Naive thymus-derived CD4-positive, alpha-beta T cell (primary cell): ENCODE measurements at regions of chr11 and their contacts with region 1.

Region 1: DNA sequence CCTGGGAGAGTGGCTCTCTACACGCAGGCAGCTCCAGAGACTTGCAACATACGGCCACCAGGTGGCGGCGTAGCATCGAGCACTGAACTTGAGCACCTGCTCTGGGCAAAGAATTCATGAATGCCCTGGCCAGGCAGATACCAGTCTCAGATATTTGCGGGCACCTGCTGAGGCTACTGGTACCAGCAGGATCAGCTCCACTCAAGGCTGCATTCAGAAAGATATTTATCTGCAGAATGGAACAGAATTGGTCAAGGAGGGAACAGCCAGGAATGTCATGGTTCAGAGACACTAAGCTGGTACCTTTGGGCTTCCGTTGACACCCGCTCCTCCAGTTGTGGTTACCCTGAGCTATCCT is 10.8 kb upstream of the CCDC86 start:
- DNase-seq: peak; percentile 60 to 82 (median 72)
- ATAC-seq: peak; percentile 89
- H3K4me3 ChIP-seq: no peak overlapping the region
- H3K4me3 Mint-ChIP-seq: peak overlapping the region in 4 of 10 donors; percentile 27 to 77 (median 74)
- H3K27ac ChIP-seq: no peak overlapping the region
- H3K27ac Mint-ChIP-seq: peak overlapping the region in 3 of 9 donors; percentile 32 to 81 (median 40)
- H3K4me1 ChIP-seq: no peaks in the 10 kb centered on the region
- H3K4me1 Mint-ChIP-seq: peaks cover 0 to 10% (median 0%) of the 10 kb centered on the region in 7 donors
- H3K27me3 ChIP-seq: no peaks in the 10 kb centered on the region
- H3K27me3 Mint-ChIP-seq: peaks cover 0 to 15% (median 4%) of the 10 kb centered on the region in 5 donors

Region 2: GRCh38 chr11:60672255-60672654 is 158.9 kb before region 1 on chr11:
- CTCF ChIA-PET with region 1: no interaction called
- POLR2A ChIA-PET with region 1: no interaction called
- intact Hi-C with region 1: no loop called
- DNase-seq: no peak
- ATAC-seq: no peak
- H3K4me3 ChIP-seq: no peak overlapping the region
- H3K4me3 Mint-ChIP-seq: no peak overlapping the region
- H3K27ac ChIP-seq: no peak overlapping the region
- H3K27ac Mint-ChIP-seq: no peak overlapping the region
- H3K4me1 ChIP-seq: no peaks in the 10 kb centered on the region
- H3K4me1 Mint-ChIP-seq: no peaks in the 10 kb centered on the region
- H3K27me3 ChIP-seq: no peaks in the 10 kb centered on the region
- H3K27me3 Mint-ChIP-seq: peaks cover 0 to 37% (median 19%) of the 10 kb centered on the region in 5 donors

Region 3: GRCh38 chr11:60775420-60775961 is 55.6 kb before region 1 on chr11:
- CTCF ChIA-PET with region 1: no interaction called
- POLR2A ChIA-PET with region 1: no interaction called
- intact Hi-C with region 1: loop called in 1 of 2 experiments (anchors 2 kb)
- DNase-seq: peak; percentile 62 to 90 (median 86)
- ATAC-seq: peak; percentile 99
- H3K4me3 ChIP-seq: no peak overlapping the region
- H3K4me3 Mint-ChIP-seq: peak overlapping the region in 3 of 10 donors; percentile 8 to 58 (median 48)
- H3K27ac ChIP-seq: no peak overlapping the region
- H3K27ac Mint-ChIP-seq: peak overlapping the region in 5 of 9 donors; percentile 4 to 78 (median 14)
- H3K4me1 ChIP-seq: no peaks in the 10 kb centered on the region
- H3K4me1 Mint-ChIP-seq: peaks cover 4 to 14% (median 10%) of the 10 kb centered on the region in 7 donors
- H3K27me3 ChIP-seq: no peaks in the 10 kb centered on the region
- H3K27me3 Mint-ChIP-seq: peaks cover 0 to 6% (median 0%) of the 10 kb centered on the region in 5 donors

Region 4: GRCh38 chr11:60860943-60861342 is 29.8 kb after region 1 on chr11:
- CTCF ChIA-PET with region 1: no interaction called
- POLR2A ChIA-PET with region 1: no interaction called
- intact Hi-C with region 1: no loop called
- DNase-seq: no peak
- ATAC-seq: no peak
- H3K4me3 ChIP-seq: no peak overlapping the region
- H3K4me3 Mint-ChIP-seq: no peak overlapping the region
- H3K27ac ChIP-seq: no peak overlapping the region
- H3K27ac Mint-ChIP-seq: no peak overlapping the region
- H3K4me1 ChIP-seq: peaks cover 7% of the 10 kb centered on the region in 2 donors
- H3K4me1 Mint-ChIP-seq: peaks cover 12 to 18% (median 15%) of the 10 kb centered on the region in 7 donors
- H3K27me3 ChIP-seq: no peaks in the 10 kb centered on the region
- H3K27me3 Mint-ChIP-seq: peaks cover 0 to 5% (median 0%) of the 10 kb centered on the region in 5 donors

Region 5: DNA sequence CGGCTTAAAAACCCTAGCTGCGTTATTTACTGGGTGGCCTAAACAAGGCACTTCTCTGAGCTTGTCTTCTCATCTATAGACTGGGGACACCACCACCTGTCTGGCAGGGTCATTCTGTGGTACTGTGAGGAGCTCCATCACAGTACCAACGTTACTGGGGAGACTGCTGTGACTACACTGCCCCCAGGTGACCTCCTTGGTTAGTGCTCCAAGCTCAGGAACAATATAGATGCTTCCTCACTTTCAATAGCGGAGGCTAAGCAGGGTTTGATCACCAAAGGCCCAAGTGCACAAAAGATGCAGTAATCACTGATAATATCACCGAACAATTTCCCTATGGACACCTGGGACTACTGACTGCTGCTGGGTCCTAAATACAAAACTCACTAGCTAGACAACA is 56.4 kb after region 1 on chr11:
- CTCF ChIA-PET with region 1: interaction called, 29 read pairs
- POLR2A ChIA-PET with region 1: no interaction called
- intact Hi-C with region 1: loop called (anchors 1 kb)
- DNase-seq: peak in 2 of 9 donors; percentile 14 to 24
- ATAC-seq: peak; percentile 87
- H3K4me3 ChIP-seq: no peak overlapping the region
- H3K4me3 Mint-ChIP-seq: no peak overlapping the region
- H3K27ac ChIP-seq: no peak overlapping the region
- H3K27ac Mint-ChIP-seq: no peak overlapping the region
- H3K4me1 ChIP-seq: no peaks in the 10 kb centered on the region
- H3K4me1 Mint-ChIP-seq: peaks cover 0 to 9% (median 7%) of the 10 kb centered on the region in 7 donors
- H3K27me3 ChIP-seq: no peaks in the 10 kb centered on the region
- H3K27me3 Mint-ChIP-seq: no peaks in the 10 kb centered on the region

Region 6: GRCh38 chr11:61054927-61055562 is 223.9 kb after region 1 on chr11:
- CTCF ChIA-PET with region 1: interaction called, 3 read pairs
- POLR2A ChIA-PET with region 1: no interaction called
- intact Hi-C with region 1: loop called in 1 of 2 experiments (anchors 1 kb)
- DNase-seq: no peak
- ATAC-seq: no peak
- H3K4me3 ChIP-seq: no peak overlapping the region
- H3K4me3 Mint-ChIP-seq: peak overlapping the region in 3 of 10 donors; percentile 9 to 33 (median 20)
- H3K27ac ChIP-seq: no peak overlapping the region
- H3K27ac Mint-ChIP-seq: peak overlapping the region in 2 of 9 donors; percentile 31 to 74
- H3K4me1 ChIP-seq: peaks cover 2 to 26% of the 10 kb centered on the region in 2 donors
- H3K4me1 Mint-ChIP-seq: peaks cover 20 to 68% (median 60%) of the 10 kb centered on the region in 7 donors
- H3K27me3 ChIP-seq: no peaks in the 10 kb centered on the region
- H3K27me3 Mint-ChIP-seq: no peaks in the 10 kb centered on the region

Region 7: GRCh38 chr11:61187505-61188130 is 356.5 kb after region 1 on chr11:
- CTCF ChIA-PET with region 1: interaction called, 60 read pairs
- POLR2A ChIA-PET with region 1: no interaction called
- intact Hi-C with region 1: loop called (anchors 1 kb)
- DNase-seq: peak; percentile 48 to 76 (median 72)
- ATAC-seq: peak; percentile 96
- H3K4me3 ChIP-seq: no peak overlapping the region
- H3K4me3 Mint-ChIP-seq: no peak overlapping the region
- H3K27ac ChIP-seq: no peak overlapping the region
- H3K27ac Mint-ChIP-seq: peak overlapping the region in 1 of 9 donors; percentile 25
- H3K4me1 ChIP-seq: no peaks in the 10 kb centered on the region
- H3K4me1 Mint-ChIP-seq: peaks cover 0 to 5% (median 0%) of the 10 kb centered on the region in 7 donors
- H3K27me3 ChIP-seq: no peaks in the 10 kb centered on the region
- H3K27me3 Mint-ChIP-seq: peaks cover 0 to 13% (median 4%) of the 10 kb centered on the region in 5 donors

Region 8: GRCh38 chr11:61384271-61385242 is 553.4 kb after region 1 on chr11:
- CTCF ChIA-PET with region 1: interaction called, 13 read pairs
- POLR2A ChIA-PET with region 1: interaction called, 3 read pairs
- intact Hi-C with region 1: loop called in 1 of 2 experiments (anchors 1 kb)
- DNase-seq: no peak
- ATAC-seq: no peak
- H3K4me3 ChIP-seq: no peak overlapping the region
- H3K4me3 Mint-ChIP-seq: no peak overlapping the region
- H3K27ac ChIP-seq: no peak overlapping the region
- H3K27ac Mint-ChIP-seq: peak overlapping the region in 1 of 9 donors; percentile 30
- H3K4me1 ChIP-seq: no peaks in the 10 kb centered on the region
- H3K4me1 Mint-ChIP-seq: peaks cover 0 to 9% (median 7%) of the 10 kb centered on the region in 7 donors
- H3K27me3 ChIP-seq: no peaks in the 10 kb centered on the region
- H3K27me3 Mint-ChIP-seq: no peaks in the 10 kb centered on the region

Region 9: DNA sequence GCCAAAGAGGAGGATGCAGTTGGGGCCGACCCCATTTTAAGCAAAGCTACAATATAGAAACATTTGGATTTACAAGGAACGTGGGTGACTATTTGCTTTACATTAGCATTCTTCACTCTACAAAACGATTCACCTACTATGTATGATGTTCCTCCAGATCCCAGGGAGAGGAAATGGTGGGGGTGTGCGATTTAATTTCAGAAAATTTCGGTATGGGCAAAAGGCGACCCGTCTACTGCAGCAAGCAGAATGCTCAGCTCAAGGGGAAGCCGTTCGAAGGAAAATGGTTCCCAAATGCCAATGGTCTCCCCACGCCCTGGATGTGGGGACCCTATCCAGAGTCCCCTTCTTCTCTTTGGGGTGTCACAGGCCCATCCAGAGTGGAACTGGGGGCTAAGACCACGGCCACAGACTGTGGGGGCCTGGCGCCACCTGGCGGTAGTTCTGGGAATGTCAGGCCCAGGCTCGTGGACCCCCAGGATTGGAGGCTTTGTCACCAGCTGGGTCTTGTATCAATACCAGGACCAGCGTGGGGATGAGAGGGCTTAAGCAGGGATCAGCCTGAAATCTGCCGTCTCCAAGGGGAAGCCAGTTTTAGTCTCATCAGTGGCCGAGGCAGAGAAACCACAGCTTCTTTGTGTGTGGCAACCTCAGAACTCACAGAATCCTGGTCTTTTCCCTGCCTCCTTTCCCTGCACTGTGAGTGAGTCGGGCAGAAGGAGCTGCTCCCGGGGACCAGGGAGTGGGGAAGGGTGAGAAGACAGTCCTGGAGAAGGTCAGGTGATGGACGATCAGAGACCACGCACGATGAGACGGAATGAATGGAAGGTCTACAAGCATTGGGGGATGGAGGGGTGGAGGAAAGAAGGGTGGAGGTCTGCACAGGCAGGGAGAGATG is 685.8 kb after region 1 on chr11:
- CTCF ChIA-PET with region 1: no interaction called
- POLR2A ChIA-PET with region 1: no interaction called
- intact Hi-C with region 1: loop called in 1 of 2 experiments (anchors 2 kb)
- DNase-seq: peak in 8 of 9 donors; percentile 31 to 68 (median 46)
- ATAC-seq: peak; percentile 78
- H3K4me3 ChIP-seq: peak overlapping the region; percentile 38
- H3K4me3 Mint-ChIP-seq: peak overlapping the region; percentile 32 to 76 (median 64)
- H3K27ac ChIP-seq: no peak overlapping the region
- H3K27ac Mint-ChIP-seq: peak overlapping the region in 2 of 9 donors; percentile 42
- H3K4me1 ChIP-seq: peaks cover 9 to 11% of the 10 kb centered on the region in 2 donors
- H3K4me1 Mint-ChIP-seq: peaks cover 8 to 15% (median 9%) of the 10 kb centered on the region in 7 donors
- H3K27me3 ChIP-seq: no peaks in the 10 kb centered on the region
- H3K27me3 Mint-ChIP-seq: peaks cover 13 to 40% (median 29%) of the 10 kb centered on the region in 5 donors